Stomach (tissue), 19 donors: ENCODE measurements at regions of chr7 and their contacts with region 1.

Region 1: DNA sequence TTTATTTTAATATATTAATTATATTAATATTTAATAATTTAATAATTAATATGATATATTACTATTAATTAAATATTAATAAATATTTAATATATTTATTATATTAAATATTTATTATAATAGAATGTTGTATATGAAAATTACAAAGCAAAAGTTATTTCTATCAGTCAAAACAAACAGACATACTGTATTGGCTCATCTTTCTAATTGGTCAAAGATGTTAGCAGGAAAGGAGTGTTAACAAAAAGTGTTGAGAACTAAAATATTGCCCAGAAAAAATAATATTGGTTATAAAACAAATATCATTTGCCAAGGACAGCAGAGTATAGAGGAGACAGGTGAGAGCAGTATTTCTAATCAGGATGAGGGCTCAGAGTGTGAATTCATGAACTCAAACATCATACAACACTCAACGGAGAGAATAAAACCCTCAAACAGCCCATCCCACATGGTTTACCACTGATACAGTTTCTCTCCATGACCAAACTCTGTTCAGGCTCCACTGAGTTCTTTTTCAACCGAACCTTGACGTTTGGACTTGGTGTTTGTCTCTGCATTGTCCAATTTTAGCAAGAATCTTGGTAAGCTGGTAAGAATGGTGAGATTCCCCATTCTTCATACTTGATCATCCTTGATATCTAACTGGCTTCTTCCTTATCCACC is 58.0 kb downstream of the TSPAN12 start:
- DNase-seq: no peak
- H3K4me3 ChIP-seq: no peak overlapping the region
- H3K27ac ChIP-seq: no peak overlapping the region
- H3K4me1 ChIP-seq: no peaks in the 10 kb centered on the region
- H3K27me3 ChIP-seq: no peaks in the 10 kb centered on the region
- CTCF ChIP-seq: no peak
- EP300 ChIP-seq: no peak
- POLR2A ChIP-seq: no peak

Region 2: GRCh38 chr7:120743128-120743527 is 56.8 kb before region 1 on chr7:
- intact Hi-C with region 1: no loop called
- DNase-seq: no peak
- H3K4me3 ChIP-seq: no peak overlapping the region
- H3K27ac ChIP-seq: peak overlapping the region in 1 of 5 donors; percentile 1
- H3K4me1 ChIP-seq: peaks cover 0 to 7% (median 0%) of the 10 kb centered on the region in 4 donors
- H3K27me3 ChIP-seq: no peaks in the 10 kb centered on the region
- CTCF ChIP-seq: no peak
- EP300 ChIP-seq: no peak
- POLR2A ChIP-seq: no peak

Region 3: GRCh38 chr7:120941064-120941463 is 141.1 kb after region 1 on chr7:
- intact Hi-C with region 1: loop called (anchors 5 kb)
- DNase-seq: peak in 1 of 2 donors; percentile 22
- H3K4me3 ChIP-seq: no peak overlapping the region
- H3K27ac ChIP-seq: no peak overlapping the region
- H3K4me1 ChIP-seq: no peaks in the 10 kb centered on the region
- H3K27me3 ChIP-seq: no peaks in the 10 kb centered on the region
- CTCF ChIP-seq: peak in 1 of 7 experiments; percentile 32
- EP300 ChIP-seq: no peak
- POLR2A ChIP-seq: no peak